CD8-positive, alpha-beta T cell (primary cell): ENCODE measurements at regions of chr1 and their contacts with region 1.

Region 1: DNA sequence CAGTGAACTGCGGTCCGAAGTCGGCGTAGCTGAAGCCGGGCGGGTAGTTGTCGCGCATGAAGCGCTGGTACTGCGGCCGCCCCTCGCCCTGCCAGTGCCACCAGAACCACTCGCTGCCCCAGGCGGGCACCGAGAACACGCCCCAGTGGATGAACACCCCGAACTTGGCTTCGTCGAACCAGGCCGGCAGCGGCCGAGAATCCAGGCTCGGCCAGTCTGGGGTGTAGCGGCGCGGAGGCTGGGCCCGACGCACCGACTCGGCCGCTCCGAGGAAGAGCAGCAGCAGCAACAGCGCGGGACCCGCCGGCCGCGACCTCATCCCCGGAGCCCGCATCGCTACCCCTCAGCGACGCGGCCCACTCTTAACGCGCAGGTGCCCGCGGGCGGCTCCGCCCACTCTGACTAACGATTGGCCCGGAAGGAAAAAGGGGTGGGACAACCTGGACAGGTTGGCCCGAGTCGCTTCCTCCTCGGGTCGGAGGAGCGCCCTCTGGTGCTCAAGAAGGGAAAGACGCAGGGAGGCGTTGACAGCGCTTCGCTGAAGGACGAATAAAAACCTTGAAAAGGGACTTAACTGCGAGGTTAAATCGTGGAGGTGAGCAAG is at the start of gene FUCA1:
- DNase-seq: peak; percentile 91 to 98 (median 96)
- ATAC-seq: peak; percentile 98
- H3K4me3 ChIP-seq: peak within 1 kb of the TSS; percentile 77 to 84
- H3K4me3 Mint-ChIP-seq: peak within 1 kb of the TSS; percentile 85
- H3K27ac ChIP-seq: peak within 1 kb of the TSS; percentile 67 to 69
- H3K27ac Mint-ChIP-seq: peak within 1 kb of the TSS; percentile 87
- H3K4me1 ChIP-seq: peaks cover 23% of the 10 kb centered on the region
- H3K4me1 Mint-ChIP-seq: peaks cover 26% of the 10 kb centered on the region
- H3K27me3 ChIP-seq: no peaks in the 10 kb centered on the region
- H3K27me3 Mint-ChIP-seq: no peaks in the 10 kb centered on the region
- CTCF ChIP-seq: peak; percentile 72
- total RNA-seq, gene FUCA1: 5.3 to 5.7 TPM

Region 2: DNA sequence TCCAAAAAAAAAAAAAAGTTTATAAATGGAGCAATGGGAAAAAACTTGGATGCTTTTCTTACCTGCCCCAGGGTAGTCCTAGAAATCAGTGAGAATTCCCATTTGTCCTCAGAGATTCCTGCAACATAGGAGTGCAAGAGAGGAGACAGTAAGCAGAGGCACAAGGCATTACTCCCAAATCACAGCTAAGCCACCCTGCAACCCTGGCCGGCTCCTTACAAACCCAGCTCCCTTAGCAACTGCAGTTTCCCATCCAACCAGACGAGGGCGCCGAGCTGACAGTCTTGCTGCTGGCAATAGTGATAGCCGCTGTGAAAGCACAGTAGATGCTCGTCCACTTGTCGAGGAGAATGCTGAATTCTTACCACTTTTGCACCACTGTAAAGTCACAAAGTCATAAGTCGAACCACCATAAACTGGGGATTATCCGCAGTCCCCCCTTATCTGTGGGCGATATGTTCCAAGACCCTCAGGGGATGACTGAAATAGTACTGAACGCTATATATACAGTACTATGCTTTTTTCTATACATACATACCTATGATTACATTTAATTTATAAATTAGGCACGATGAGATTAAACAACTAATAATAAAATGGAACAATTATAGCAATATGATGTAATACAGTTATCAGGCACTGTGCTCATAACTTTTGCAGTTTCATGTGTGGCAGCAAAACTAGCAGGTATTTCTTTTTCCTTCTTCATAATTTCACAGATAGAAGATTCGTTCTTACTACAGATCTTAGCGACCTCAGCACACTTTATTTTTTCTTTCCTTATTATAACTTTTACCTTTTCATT is 95.8 kb before region 1 on chr1:
- CTCF ChIA-PET with region 1: interaction called, 12 read pairs
- POLR2A ChIA-PET with region 1: no interaction called
- intact Hi-C with region 1: loop called in 1 of 2 experiments (anchors 1 kb)
- DNase-seq: peak; percentile 73 to 89 (median 85)
- ATAC-seq: peak; percentile 99
- H3K4me3 ChIP-seq: no peak overlapping the region
- H3K4me3 Mint-ChIP-seq: no peak overlapping the region
- H3K27ac ChIP-seq: no peak overlapping the region
- H3K27ac Mint-ChIP-seq: no peak overlapping the region
- H3K4me1 ChIP-seq: peaks cover 2% of the 10 kb centered on the region
- H3K4me1 Mint-ChIP-seq: peaks cover 27% of the 10 kb centered on the region
- H3K27me3 ChIP-seq: no peaks in the 10 kb centered on the region
- H3K27me3 Mint-ChIP-seq: no peaks in the 10 kb centered on the region
- CTCF ChIP-seq: peak; percentile 94

Region 3: DNA sequence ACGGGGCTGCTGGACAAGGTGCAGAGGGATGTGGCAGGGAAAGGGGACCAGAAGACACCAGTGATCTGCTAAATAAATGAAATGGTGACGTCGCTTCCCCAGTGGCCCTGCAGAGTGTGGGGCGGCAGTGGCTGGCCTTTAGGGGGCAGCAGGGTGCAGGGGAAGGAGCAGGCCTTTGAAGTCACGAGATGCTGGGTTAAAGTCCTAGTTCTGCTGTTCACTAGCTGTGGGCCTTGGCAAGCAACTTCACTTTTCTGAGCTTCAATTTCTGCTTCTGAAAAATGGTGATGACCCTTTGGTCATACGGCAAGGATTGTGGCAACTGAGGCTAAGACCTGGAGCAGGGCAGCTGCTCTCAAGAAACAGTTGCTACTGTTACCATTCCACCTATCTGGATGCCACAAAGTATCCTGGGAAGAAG is 58.3 kb before region 1 on chr1:
- CTCF ChIA-PET with region 1: interaction called, 32 read pairs
- POLR2A ChIA-PET with region 1: interaction called, 3 read pairs
- intact Hi-C with region 1: loop called (anchors 1 kb)
- DNase-seq: peak; percentile 71 to 89 (median 83)
- ATAC-seq: peak; percentile 95
- H3K4me3 ChIP-seq: no peak overlapping the region
- H3K4me3 Mint-ChIP-seq: no peak overlapping the region
- H3K27ac ChIP-seq: no peak overlapping the region
- H3K27ac Mint-ChIP-seq: peak overlapping the region; percentile 22
- H3K4me1 ChIP-seq: peaks cover 6% of the 10 kb centered on the region
- H3K4me1 Mint-ChIP-seq: peaks cover 10% of the 10 kb centered on the region
- H3K27me3 ChIP-seq: no peaks in the 10 kb centered on the region
- H3K27me3 Mint-ChIP-seq: no peaks in the 10 kb centered on the region
- CTCF ChIP-seq: peak; percentile 79

Region 4: DNA sequence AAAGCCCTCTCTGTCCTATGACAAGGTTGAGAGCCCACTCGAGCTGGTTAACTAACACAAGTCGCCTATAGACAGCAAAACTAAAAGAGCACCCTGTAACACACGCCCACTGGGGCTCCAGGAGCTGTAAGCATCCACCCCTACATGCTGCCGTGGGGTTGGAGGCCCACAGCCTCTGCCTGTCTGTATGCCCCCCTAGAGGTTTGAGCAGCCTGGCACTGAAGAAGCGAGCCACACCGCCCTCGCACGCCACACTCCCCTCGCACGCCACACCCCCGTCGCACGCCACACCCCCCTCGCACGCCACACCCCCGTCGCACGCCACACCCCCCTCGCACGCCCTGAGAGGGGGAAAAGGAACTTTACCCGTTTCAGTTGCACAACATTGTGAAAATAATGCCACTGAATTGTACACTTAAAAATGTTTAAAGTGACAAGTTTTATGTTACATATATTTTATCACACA is 29.6 kb before region 1 on chr1:
- CTCF ChIA-PET with region 1: no interaction called
- POLR2A ChIA-PET with region 1: no interaction called
- intact Hi-C with region 1: loop called in 1 of 2 experiments (anchors 1 kb)
- DNase-seq: peak; percentile 55 to 91 (median 81)
- ATAC-seq: peak; percentile 100
- H3K4me3 ChIP-seq: peak overlapping the region; percentile 37 to 39
- H3K4me3 Mint-ChIP-seq: peak overlapping the region; percentile 79
- H3K27ac ChIP-seq: no peak overlapping the region
- H3K27ac Mint-ChIP-seq: peak overlapping the region; percentile 64
- H3K4me1 ChIP-seq: peaks cover 5% of the 10 kb centered on the region
- H3K4me1 Mint-ChIP-seq: peaks cover 11% of the 10 kb centered on the region
- H3K27me3 ChIP-seq: peaks cover 0 to 2% of the 10 kb centered on the region in 2 experiments
- H3K27me3 Mint-ChIP-seq: no peaks in the 10 kb centered on the region
- CTCF ChIP-seq: no peak